Activated CD4-positive, alpha-beta memory T cell treated with anti-CD3 and anti-CD28 coated beads for 36 hours (primary cell): ENCODE measurements at regions of chr2 and their contacts with region 1.

Region 1: GRCh38 chr2:181457121-181457740 is at the start of gene ITGA4:
- DNase-seq: peak; percentile 90
- H3K4me3 Mint-ChIP-seq: peak within 1 kb of the TSS; percentile 88
- H3K27ac Mint-ChIP-seq: peak within 1 kb of the TSS; percentile 97
- H3K4me1 Mint-ChIP-seq: peaks cover 50% of the 10 kb centered on the region
- H3K27me3 Mint-ChIP-seq: no peaks in the 10 kb centered on the region
- total RNA-seq, gene ITGA4: 46.5 to 51.2 TPM

Region 2: DNA sequence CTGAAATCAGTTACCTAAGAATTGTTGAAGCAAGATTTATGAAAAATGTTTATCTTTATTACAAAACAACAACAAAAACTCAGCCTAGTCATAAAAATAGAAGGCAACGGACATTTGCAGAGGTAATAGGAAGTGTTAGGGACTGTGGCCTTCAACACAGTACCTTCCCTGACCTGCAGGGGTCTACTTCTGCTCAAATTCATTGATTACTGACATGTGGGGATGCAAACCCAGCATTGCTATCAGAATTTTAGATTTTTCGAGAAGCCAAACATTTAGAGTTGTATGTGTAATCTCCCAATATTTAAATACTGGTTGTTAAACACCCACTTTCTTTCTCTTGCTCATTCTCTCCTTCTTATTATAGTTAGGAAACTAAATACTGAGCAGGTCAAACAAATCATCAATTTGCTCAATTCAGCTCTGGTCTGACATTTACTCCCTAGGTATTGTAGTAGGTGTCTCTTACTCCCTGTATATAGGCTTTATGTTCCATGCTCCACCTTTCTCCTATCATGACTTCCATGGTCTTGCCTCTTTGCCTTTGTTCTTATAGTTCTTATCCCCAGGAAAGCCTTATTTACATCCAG is 278.3 kb before region 1 on chr2:
- CTCF ChIA-PET with region 1: interaction called, 5 read pairs
- POLR2A ChIA-PET with region 1: no interaction called
- intact Hi-C with region 1: loop called (anchors 2 kb)
- DNase-seq: peak; percentile 55
- H3K4me3 Mint-ChIP-seq: no peak overlapping the region
- H3K27ac Mint-ChIP-seq: peak overlapping the region; percentile 73
- H3K4me1 Mint-ChIP-seq: peaks cover 46% of the 10 kb centered on the region
- H3K27me3 Mint-ChIP-seq: no peaks in the 10 kb centered on the region

Region 3: GRCh38 chr2:181218401-181218821 is 238.8 kb before region 1 on chr2:
- CTCF ChIA-PET with region 1: no interaction called
- POLR2A ChIA-PET with region 1: no interaction called
- intact Hi-C with region 1: no loop called
- DNase-seq: no peak
- H3K4me3 Mint-ChIP-seq: no peak overlapping the region
- H3K27ac Mint-ChIP-seq: no peak overlapping the region
- H3K4me1 Mint-ChIP-seq: peaks cover 9% of the 10 kb centered on the region
- H3K27me3 Mint-ChIP-seq: no peaks in the 10 kb centered on the region

Region 4: DNA sequence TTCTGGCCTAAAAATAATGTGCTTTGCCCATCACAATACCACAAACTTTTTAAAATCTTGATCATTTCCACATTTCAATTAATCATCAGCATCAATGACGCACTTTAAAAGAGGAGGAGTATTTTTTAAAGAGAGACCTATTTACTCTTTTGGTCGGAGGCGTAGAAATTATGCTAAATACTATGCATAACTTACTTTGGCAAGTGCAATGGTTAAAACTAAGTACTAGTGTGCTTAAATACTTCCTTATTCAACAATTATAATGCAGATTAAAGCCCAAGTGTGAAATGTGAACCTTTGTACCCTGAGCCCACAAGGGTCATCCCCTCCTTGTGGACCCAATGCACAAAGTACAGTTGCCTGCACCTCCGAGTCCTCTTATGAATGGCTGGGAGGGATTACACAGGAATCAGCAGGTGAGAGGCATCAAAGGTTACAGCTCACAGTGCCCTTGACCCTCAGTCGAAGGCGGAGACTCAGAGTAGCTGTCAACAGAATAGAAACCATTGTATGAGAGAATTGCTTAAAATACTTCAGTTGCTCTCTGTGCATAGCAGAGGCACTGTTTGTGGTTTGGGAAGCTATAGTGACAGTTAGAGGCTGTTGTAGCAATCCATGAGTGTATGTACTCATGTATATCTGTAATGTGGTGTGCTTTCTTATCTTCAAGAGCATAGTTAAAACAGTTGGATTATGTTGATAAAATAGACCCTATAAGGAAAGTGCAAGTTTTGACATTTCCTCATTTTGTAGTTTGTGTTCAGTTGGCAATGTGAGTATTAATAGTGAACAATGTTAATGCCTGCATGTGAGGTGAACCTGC is 151.7 kb before region 1 on chr2:
- CTCF ChIA-PET with region 1: interaction called, 12 read pairs
- POLR2A ChIA-PET with region 1: interaction called, 9 read pairs
- intact Hi-C with region 1: loop called (anchors 1 kb)
- DNase-seq: peak; percentile 69
- H3K4me3 Mint-ChIP-seq: peak overlapping the region; percentile 48
- H3K27ac Mint-ChIP-seq: peak overlapping the region; percentile 97
- H3K4me1 Mint-ChIP-seq: peaks cover 74% of the 10 kb centered on the region
- H3K27me3 Mint-ChIP-seq: no peaks in the 10 kb centered on the region

Region 5: GRCh38 chr2:181420259-181421130 is 36.7 kb before region 1 on chr2:
- CTCF ChIA-PET with region 1: no interaction called
- POLR2A ChIA-PET with region 1: no interaction called
- intact Hi-C with region 1: loop called (anchors 5 kb)
- DNase-seq: no peak
- H3K4me3 Mint-ChIP-seq: no peak overlapping the region
- H3K27ac Mint-ChIP-seq: peak overlapping the region; percentile 40
- H3K4me1 Mint-ChIP-seq: peaks cover 16% of the 10 kb centered on the region
- H3K27me3 Mint-ChIP-seq: no peaks in the 10 kb centered on the region

Region 6: DNA sequence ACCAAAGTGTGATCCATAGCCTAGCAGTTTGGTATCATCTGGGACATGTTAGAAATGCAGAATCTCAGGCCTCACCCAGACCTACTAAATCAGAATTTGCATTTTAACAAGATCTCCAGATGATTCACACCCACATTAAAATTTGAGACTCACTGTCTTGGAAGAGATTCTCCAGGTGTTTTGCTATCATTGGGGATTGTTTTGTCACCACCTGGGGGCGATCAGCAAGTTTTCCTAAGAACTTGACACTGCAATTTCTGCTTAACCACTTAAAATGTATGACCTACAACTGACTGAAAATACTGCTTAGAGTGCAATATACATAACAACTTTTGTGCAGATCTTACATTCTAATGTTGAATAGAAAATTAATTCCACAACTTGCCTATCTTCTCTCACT is 19.0 kb before region 1 on chr2:
- CTCF ChIA-PET with region 1: interaction called, 7 read pairs
- POLR2A ChIA-PET with region 1: interaction called, 3 read pairs
- intact Hi-C with region 1: loop called (anchors 1 kb)
- DNase-seq: peak; percentile 44
- H3K4me3 Mint-ChIP-seq: no peak overlapping the region
- H3K27ac Mint-ChIP-seq: no peak overlapping the region
- H3K4me1 Mint-ChIP-seq: peaks cover 19% of the 10 kb centered on the region
- H3K27me3 Mint-ChIP-seq: no peaks in the 10 kb centered on the region

Region 7: GRCh38 chr2:181891966-181892798 is 435.0 kb after region 1 on chr2:
- CTCF ChIA-PET with region 1: no interaction called
- POLR2A ChIA-PET with region 1: no interaction called
- intact Hi-C with region 1: loop called (anchors 5 kb)
- DNase-seq: peak; percentile 68
- H3K4me3 Mint-ChIP-seq: peak overlapping the region; percentile 96
- H3K27ac Mint-ChIP-seq: peak overlapping the region; percentile 77
- H3K4me1 Mint-ChIP-seq: peaks cover 23% of the 10 kb centered on the region
- H3K27me3 Mint-ChIP-seq: peaks cover 7% of the 10 kb centered on the region